ENCODE measurements at regions of chr11 and their contacts with region 1.

Region 1: GRCh38 chr11:20127671-20128527 is 32.4 kb downstream of the DBX1 start:
- DNase-seq: peak; percentile 62 to 69 (median 65)
- H3K4me3 ChIP-seq: no peak overlapping the region
- H3K4me3 Mint-ChIP-seq: no peak overlapping the region
- H3K27ac ChIP-seq: no peak overlapping the region
- H3K27ac Mint-ChIP-seq: peak overlapping the region in 1 of 7 donors; percentile 29
- H3K4me1 ChIP-seq: peaks cover 13% of the 10 kb centered on the region
- H3K4me1 Mint-ChIP-seq: peaks cover 6 to 14% (median 8%) of the 10 kb centered on the region in 4 donors
- H3K27me3 ChIP-seq: no peaks in the 10 kb centered on the region
- H3K27me3 Mint-ChIP-seq: peaks cover 2 to 5% of the 10 kb centered on the region in 2 donors

Region 2: GRCh38 chr11:20105427-20105826 is 22.5 kb before region 1 on chr11:
- CTCF ChIA-PET with region 1: interaction called, 54 read pairs
- POLR2A ChIA-PET with region 1: no interaction called
- intact Hi-C with region 1: no loop called
- DNase-seq: no peak
- H3K4me3 ChIP-seq: no peak overlapping the region
- H3K4me3 Mint-ChIP-seq: no peak overlapping the region
- H3K27ac ChIP-seq: no peak overlapping the region
- H3K27ac Mint-ChIP-seq: peak overlapping the region in 1 of 7 donors; percentile 9
- H3K4me1 ChIP-seq: no peaks in the 10 kb centered on the region
- H3K4me1 Mint-ChIP-seq: no peaks in the 10 kb centered on the region
- H3K27me3 ChIP-seq: no peaks in the 10 kb centered on the region
- H3K27me3 Mint-ChIP-seq: no peaks in the 10 kb centered on the region

Region 3: DNA sequence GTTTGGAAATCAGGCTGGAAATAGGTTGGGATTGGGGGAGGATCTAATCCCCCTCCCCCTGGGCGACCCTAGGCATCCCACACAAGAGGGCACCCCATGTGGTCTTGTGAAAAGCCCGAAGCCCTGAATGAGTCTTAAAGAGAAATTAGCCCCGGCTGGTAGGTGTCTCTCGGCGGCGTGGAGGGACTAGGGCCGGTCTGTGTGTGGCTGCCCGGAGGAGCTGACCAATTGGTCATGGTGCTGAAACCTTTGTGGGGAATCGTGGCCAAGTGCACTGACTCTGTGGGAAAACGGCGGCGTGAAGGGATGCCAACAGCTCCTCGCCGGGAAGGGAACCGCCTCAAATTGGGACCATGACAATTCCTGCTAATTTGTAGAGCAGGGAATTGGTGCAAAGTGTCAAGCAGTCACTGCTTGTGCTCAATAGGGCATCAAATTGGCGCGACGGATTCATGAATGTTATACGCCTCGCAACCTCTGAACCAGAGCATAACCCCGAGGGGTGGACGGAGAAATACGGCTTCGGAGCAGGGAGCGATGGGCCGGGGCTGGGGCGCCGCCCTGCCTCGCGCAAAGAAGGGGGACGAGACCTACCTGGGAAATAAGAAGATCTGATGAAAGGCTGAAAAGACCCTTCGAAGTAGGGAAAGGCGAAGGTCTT is 30.8 kb after region 1 on chr11:
- CTCF ChIA-PET with region 1: interaction called, 17 read pairs
- POLR2A ChIA-PET with region 1: interaction called, 3 read pairs
- intact Hi-C with region 1: loop called (anchors 2 kb)
- DNase-seq: peak in 2 of 5 donors; percentile 2 to 5
- H3K4me3 ChIP-seq: no peak overlapping the region
- H3K4me3 Mint-ChIP-seq: peak overlapping the region; percentile 26 to 60 (median 42)
- H3K27ac ChIP-seq: no peak overlapping the region
- H3K27ac Mint-ChIP-seq: peak overlapping the region in 4 of 7 donors; percentile 29 to 89 (median 58)
- H3K4me1 ChIP-seq: peaks cover 29% of the 10 kb centered on the region
- H3K4me1 Mint-ChIP-seq: peaks cover 26 to 70% (median 33%) of the 10 kb centered on the region in 4 donors
- H3K27me3 ChIP-seq: peaks cover 52% of the 10 kb centered on the region
- H3K27me3 Mint-ChIP-seq: peaks cover 50 to 62% of the 10 kb centered on the region in 2 donors

Region 4: GRCh38 chr11:20355221-20356219 is 227.6 kb after region 1 on chr11:
- CTCF ChIA-PET with region 1: interaction called, 135 read pairs
- POLR2A ChIA-PET with region 1: interaction called, 5 read pairs
- intact Hi-C with region 1: loop called (anchors 1 kb)
- DNase-seq: peak in 3 of 5 donors; percentile 10 to 41 (median 19)
- H3K4me3 ChIP-seq: no peak overlapping the region
- H3K4me3 Mint-ChIP-seq: no peak overlapping the region
- H3K27ac ChIP-seq: no peak overlapping the region
- H3K27ac Mint-ChIP-seq: no peak overlapping the region
- H3K4me1 ChIP-seq: peaks cover 16% of the 10 kb centered on the region
- H3K4me1 Mint-ChIP-seq: peaks cover 11 to 26% (median 12%) of the 10 kb centered on the region in 4 donors
- H3K27me3 ChIP-seq: no peaks in the 10 kb centered on the region
- H3K27me3 Mint-ChIP-seq: peaks cover 0 to 3% of the 10 kb centered on the region in 2 donors

Region 5: DNA sequence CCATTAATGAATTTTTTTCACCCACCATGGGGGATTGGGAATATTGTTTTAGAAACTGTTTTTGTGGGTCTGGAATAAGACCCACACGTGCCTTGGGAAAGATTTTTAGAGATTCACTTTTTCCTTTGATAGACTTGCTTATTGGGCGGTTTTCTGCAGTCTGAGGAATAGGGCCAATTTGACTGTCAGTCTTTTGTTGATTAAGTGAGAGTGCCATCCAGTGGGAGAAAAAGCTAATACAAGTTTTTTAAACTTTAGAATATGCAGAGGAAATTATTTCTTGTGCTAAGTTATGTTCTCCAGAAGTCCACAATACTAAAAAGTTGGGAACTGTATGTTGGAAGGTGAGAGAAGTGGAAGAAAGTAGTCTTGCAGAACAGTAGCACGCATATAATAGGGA is 315.7 kb after region 1 on chr11:
- CTCF ChIA-PET with region 1: interaction called, 8 read pairs
- POLR2A ChIA-PET with region 1: no interaction called
- intact Hi-C with region 1: loop called (anchors 1 kb)
- DNase-seq: peak in 2 of 5 donors; percentile 6 to 14
- H3K4me3 ChIP-seq: no peak overlapping the region
- H3K4me3 Mint-ChIP-seq: no peak overlapping the region
- H3K27ac ChIP-seq: no peak overlapping the region
- H3K27ac Mint-ChIP-seq: no peak overlapping the region
- H3K4me1 ChIP-seq: no peaks in the 10 kb centered on the region
- H3K4me1 Mint-ChIP-seq: peaks cover 0 to 5% (median 3%) of the 10 kb centered on the region in 4 donors
- H3K27me3 ChIP-seq: no peaks in the 10 kb centered on the region
- H3K27me3 Mint-ChIP-seq: no peaks in the 10 kb centered on the region

Region 6: GRCh38 chr11:20671856-20672546 is 544.1 kb after region 1 on chr11:
- CTCF ChIA-PET with region 1: interaction called, 10 read pairs
- POLR2A ChIA-PET with region 1: no interaction called
- intact Hi-C with region 1: loop called (anchors 2 kb)
- DNase-seq: no peak
- H3K4me3 ChIP-seq: no peak overlapping the region
- H3K4me3 Mint-ChIP-seq: no peak overlapping the region
- H3K27ac ChIP-seq: no peak overlapping the region
- H3K27ac Mint-ChIP-seq: no peak overlapping the region
- H3K4me1 ChIP-seq: no peaks in the 10 kb centered on the region
- H3K4me1 Mint-ChIP-seq: peaks cover 7 to 24% (median 14%) of the 10 kb centered on the region in 4 donors
- H3K27me3 ChIP-seq: peaks cover 12% of the 10 kb centered on the region
- H3K27me3 Mint-ChIP-seq: peaks cover 34 to 40% of the 10 kb centered on the region in 2 donors